Mammary epithelial cell (primary cell): ENCODE measurements at regions of chr4 and their contacts with region 1.

Region 1: DNA sequence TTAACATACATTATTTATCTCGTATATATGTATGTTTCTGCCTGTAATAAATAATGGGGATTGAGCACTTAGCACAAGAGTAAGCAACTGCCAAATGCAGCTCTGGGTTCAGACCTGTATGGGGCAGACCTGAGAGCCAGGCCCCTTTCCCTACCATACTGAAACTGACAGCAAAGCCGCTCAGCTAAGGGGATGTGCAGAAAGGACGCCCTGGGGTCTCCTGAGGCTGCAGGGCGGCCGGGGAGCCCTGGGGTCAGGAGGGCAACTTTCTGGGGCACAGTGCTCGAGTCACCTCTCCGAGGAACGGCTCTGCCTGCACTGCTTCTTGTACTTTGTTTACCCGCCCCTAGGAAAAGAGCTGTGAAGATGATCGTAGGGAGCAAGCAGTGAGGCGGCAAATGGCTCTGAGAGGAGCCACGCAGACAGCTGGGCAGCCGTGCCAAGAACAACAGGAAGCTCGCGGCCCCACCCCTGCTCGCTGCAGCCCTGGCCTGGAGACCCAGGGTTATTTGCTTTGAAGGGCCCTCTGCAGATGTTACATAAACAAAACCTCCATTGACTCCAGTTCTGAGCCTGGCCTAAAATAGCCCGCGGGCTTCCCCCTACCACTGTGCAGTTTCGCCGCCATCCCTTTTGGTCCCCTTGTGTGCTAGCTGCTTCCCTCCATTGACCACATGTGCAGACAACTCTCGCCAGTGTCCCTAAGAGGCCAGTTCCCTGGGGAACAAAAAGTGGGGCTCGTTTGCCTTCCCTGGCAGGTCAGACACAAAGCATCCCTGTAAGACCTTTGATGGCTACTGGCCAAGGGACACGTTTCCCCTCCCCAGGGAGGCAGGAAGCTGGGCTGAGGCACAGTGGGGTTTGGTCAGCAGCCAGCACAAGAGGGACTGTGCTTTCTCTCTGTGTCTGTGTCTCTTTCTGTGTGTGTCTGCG is 111.3 kb upstream of the LNX1 start:
- DNase-seq: peak; percentile 52
- H3K4me3 ChIP-seq: peak overlapping the region in 2 of 3 experiments; percentile 17 to 20
- H3K27ac ChIP-seq: no peak overlapping the region
- H3K4me1 ChIP-seq: peaks cover 11% of the 10 kb centered on the region
- H3K27me3 ChIP-seq: no peaks in the 10 kb centered on the region
- CTCF ChIP-seq: peak in 1 of 2 donors; percentile 7

Region 2: GRCh38 chr4:53205970-53206369 is 496.6 kb before region 1 on chr4:
- CTCF ChIA-PET with region 1: no interaction called
- dilution Hi-C with region 1: loop called (anchors 5 kb)
- in situ Hi-C with region 1: no loop called
- intact Hi-C with region 1: no loop called
- DNase-seq: no peak
- H3K4me3 ChIP-seq: no peak overlapping the region
- H3K27ac ChIP-seq: no peak overlapping the region
- H3K4me1 ChIP-seq: no peaks in the 10 kb centered on the region
- H3K27me3 ChIP-seq: no peaks in the 10 kb centered on the region
- CTCF ChIP-seq: no peak

Region 3: DNA sequence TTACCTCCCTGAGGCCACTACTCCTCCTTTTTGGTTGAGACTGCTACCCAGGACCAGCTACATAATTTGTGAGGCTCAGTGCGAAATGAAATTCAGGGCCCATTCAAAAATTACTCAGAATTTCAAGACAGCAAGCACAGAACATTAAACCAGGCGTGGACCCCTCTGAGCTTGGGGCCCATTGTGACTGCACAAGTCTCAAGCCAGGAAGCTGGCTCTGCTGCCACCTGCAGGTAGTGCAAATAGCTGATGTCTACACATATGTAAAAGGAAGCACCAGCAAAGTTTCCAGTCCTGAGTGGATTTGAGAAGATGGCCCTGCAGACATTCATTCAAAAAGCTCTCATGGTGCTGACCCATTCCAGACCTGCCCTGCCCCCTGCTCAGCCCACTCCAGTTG is 102.1 kb after region 1 on chr4:
- CTCF ChIA-PET with region 1: interaction called, 6 read pairs
- dilution Hi-C with region 1: no loop called
- in situ Hi-C with region 1: no loop called
- intact Hi-C with region 1: loop called (anchors 1 kb)
- DNase-seq: peak; percentile 17
- H3K4me3 ChIP-seq: no peak overlapping the region
- H3K27ac ChIP-seq: no peak overlapping the region
- H3K4me1 ChIP-seq: no peaks in the 10 kb centered on the region
- H3K27me3 ChIP-seq: no peaks in the 10 kb centered on the region
- CTCF ChIP-seq: peak; percentile 81 to 83

Region 4: GRCh38 chr4:54228056-54228527 is 525.5 kb after region 1 on chr4:
- CTCF ChIA-PET with region 1: interaction called, 8 read pairs
- dilution Hi-C with region 1: no loop called
- in situ Hi-C with region 1: loop called (anchors 10 kb)
- intact Hi-C with region 1: no loop called
- DNase-seq: peak; percentile 65
- H3K4me3 ChIP-seq: peak overlapping the region; percentile 39 to 66 (median 53)
- H3K27ac ChIP-seq: no peak overlapping the region
- H3K4me1 ChIP-seq: peaks cover 24% of the 10 kb centered on the region
- H3K27me3 ChIP-seq: peaks cover 24% of the 10 kb centered on the region
- CTCF ChIP-seq: peak; percentile 88 to 95